Left cardiac atrium (tissue), 4 donors: ENCODE measurements at regions of chr9 and their contacts with region 1.

Region 1: DNA sequence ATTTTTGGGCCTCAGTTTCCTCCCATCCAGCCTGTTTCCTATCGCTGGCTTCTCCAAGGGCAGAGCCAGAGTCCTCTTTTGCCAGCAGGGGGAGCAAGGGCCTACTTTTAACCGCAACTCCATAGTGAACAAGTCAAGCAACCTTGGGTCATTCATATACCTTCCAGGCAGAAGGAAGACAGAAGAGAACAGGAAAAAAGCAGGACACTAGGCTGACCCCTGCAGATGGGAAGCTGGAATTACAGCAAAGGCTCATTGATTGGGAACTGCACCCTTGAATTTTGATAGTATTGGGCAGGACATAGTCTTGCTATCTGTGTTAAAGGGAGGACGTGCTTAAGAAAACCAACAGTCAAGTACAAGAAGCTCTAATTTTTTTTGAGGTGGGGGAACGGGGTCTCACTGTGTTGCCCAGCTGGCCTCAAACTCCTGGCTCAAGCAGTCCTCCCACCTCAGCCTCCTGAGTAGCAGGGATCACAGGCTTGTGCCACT is 30.1 kb downstream of the QRFP start:
- DNase-seq: peak; percentile 67
- ATAC-seq: peak; percentile 48 to 54

Region 2: DNA sequence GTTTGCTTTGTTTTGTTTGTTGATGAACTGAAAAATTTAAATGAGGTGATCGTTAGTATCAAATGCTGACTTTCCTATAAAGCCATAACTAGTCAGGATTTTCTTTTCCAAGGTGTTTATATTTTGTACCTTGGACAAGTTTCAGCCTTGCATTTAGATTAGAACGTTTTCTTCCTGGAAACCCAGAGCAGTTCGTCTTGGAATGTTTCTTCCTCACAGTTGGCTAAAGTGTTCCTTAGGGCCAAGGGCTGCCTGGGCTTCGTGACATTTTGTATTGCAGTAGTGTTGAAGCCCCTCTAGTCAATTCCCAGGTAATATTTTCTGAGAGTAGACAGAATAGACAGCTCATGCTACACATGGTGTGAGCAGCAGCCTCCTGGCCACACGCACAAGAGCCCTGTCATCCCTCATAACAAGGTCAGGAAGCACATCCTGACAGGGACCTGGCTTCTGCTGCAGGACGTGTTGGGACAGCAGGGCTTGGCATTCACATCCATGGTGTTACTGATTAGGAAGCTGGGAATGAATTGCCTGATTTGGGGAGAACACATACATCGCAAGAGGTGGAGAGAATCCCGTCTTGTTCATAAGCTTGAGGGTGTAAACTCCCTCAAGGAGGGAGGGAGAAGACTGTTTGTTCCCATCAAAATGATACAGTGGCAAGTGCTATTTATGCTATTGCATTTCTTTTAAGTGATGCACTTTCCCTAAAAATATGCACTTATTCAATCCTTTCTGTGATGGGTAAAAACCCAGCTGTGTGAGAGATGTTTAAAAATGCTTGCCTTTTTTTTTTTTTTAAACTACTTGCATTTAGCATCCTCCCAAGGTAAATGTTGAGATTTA is 255.4 kb before region 1 on chr9:
- intact Hi-C with region 1: no loop called
- DNase-seq: no peak
- ATAC-seq: peak; percentile 77 to 90

Region 3: DNA sequence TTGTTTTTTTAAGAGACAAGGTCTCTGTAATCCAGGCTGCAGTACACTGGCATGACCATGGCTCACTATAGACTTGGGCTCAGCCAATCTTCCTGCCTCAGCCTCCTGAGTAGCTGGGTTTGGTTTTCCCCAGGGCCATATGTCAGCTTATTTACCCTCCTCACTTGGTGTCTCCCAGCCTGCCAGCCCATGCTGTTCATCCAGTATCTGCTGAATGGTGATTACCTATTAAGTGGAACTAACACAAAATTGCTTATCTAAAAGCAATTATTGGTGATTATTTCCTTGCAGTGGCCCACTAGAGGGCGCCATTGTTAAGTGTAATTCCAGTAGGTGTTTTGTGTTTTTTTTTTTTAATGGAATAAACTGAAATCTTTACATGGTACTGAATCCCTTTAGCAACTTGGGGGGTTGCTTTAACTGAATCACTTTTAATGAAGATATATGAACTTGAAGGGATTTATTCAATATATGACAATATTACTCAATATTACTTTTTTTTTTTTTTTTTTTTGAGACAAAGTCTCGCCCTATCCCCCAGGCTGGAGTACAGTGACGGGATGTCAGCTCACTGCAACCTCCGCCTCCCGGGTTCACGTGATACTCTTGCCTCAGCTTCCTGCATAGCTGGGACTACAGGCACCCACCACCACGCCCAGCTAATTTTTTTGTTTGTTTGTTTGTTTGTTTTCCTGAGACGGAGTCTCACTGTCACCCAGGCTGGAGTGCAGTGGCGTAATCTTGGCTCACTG is 159.1 kb before region 1 on chr9:
- intact Hi-C with region 1: loop called (anchors 2 to 5 kb)
- DNase-seq: peak; percentile 78
- ATAC-seq: peak; percentile 29 to 30

Region 4: GRCh38 chr9:130932255-130933079 is 65.9 kb after region 1 on chr9:
- intact Hi-C with region 1: loop called (anchors 2 to 5 kb)
- DNase-seq: peak; percentile 76
- ATAC-seq: peak; percentile 84

Region 5: GRCh38 chr9:130940693-130941576 is 74.4 kb after region 1 on chr9:
- intact Hi-C with region 1: loop called in 1 of 2 experiments (anchors 5 kb)
- DNase-seq: peak; percentile 63
- ATAC-seq: peak; percentile 49 to 78

Region 6: DNA sequence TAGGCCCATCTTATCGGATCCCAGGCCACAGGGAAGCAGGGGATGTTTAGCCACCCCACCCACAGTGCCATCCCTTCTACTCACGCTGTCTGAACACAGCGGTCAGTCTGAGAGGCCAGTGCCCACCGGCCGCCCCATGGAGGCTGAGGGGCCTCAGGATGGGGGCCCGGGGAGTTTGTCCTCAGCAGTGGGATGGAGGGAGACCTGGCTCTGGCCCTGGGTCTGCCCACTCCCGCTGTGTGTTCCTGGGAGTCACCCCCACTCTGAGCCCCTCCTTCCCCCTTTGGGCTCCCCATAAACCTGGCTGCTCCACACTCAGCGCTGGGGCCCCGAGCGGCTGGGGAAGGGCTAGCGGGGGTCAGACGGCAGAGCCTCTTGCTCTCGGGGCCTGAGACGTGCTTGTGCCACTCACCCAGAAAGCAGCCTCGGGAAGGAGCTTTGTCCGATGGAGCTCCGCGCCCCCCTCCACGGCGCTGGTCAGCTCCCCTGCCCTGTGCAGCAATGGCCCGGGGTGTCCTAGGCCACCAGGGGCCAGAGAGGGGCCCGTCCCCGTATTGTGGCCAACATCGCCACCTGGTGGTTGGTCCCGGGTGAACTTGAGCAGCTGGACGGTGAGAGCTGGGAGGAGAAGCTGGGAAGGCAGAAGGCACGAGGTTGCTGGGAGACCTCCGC is 131.5 kb after region 1 on chr9:
- intact Hi-C with region 1: loop called in 1 of 2 experiments (anchors 2 kb)
- DNase-seq: peak; percentile 74
- ATAC-seq: peak; percentile 89 to 90

Region 7: GRCh38 chr9:131018621-131019020 is 152.1 kb after region 1 on chr9:
- intact Hi-C with region 1: no loop called
- DNase-seq: no peak
- ATAC-seq: no peak

Region 8: GRCh38 chr9:131082774-131083512 is 216.4 kb after region 1 on chr9:
- intact Hi-C with region 1: no loop called
- DNase-seq: no peak
- ATAC-seq: no peak